ENCODE measurements at regions of chr3 and their contacts with region 1.

Region 1: GRCh38 chr3:24539699-24540098 is 45.0 kb upstream of the THRB start:
- DNase-seq: no peak
- H3K4me3 ChIP-seq: no peak overlapping the region
- H3K4me3 Mint-ChIP-seq: no peak overlapping the region
- H3K27ac Mint-ChIP-seq: no peak overlapping the region
- H3K4me1 ChIP-seq: no peaks in the 10 kb centered on the region
- H3K4me1 Mint-ChIP-seq: peaks cover 6% of the 10 kb centered on the region
- H3K27me3 ChIP-seq: no peaks in the 10 kb centered on the region
- H3K27me3 Mint-ChIP-seq: no peaks in the 10 kb centered on the region
- CTCF ChIP-seq: no peak

Region 2: DNA sequence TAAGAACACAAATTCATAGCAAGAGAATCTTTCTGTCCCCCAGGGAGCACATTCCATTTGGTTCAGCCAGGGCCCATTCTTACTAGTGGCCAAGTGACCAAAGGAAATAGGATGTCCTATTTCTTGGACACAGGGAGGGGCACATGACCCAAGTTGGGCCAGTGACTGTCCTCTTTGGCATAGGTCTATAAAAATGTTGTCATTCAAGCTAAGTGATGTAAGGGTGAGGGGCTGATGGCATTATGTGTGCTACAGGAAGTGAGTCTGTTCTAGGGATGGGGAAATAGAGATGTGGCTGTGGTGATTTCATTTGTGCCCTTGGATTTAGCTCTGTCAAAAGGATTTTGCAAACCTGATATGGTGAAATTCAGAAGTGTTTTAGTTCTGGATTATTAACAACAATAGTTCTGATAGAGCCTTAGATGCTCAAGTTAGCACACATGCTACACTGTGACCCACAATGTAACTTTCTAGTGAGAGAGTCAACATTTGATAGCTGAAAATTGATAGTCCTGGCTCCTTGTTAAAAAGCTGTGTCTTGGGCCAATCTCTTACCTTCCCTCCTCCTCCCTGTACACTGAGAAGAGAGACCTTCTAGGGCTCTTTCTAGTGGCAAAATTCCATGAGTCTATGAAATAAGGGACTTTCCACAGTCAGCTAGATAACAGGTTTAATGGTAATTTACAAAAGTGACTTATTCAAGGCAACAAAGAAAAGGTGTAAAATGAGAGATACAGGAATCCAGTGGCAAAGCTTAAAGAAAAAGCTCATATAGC is 162.3 kb before region 1 on chr3:
- CTCF ChIA-PET with region 1: no interaction called
- POLR2A ChIA-PET with region 1: interaction called, 13 read pairs
- intact Hi-C with region 1: no loop called
- DNase-seq: no peak
- H3K4me3 ChIP-seq: no peak overlapping the region
- H3K4me3 Mint-ChIP-seq: no peak overlapping the region
- H3K27ac Mint-ChIP-seq: no peak overlapping the region
- H3K4me1 ChIP-seq: peaks cover 39% of the 10 kb centered on the region
- H3K4me1 Mint-ChIP-seq: peaks cover 35% of the 10 kb centered on the region
- H3K27me3 ChIP-seq: no peaks in the 10 kb centered on the region
- H3K27me3 Mint-ChIP-seq: no peaks in the 10 kb centered on the region
- CTCF ChIP-seq: no peak

Measured in Caco-2 (cell line).